ENCODE measurements at regions of chr11 and their contacts with region 1.

Region 1: DNA sequence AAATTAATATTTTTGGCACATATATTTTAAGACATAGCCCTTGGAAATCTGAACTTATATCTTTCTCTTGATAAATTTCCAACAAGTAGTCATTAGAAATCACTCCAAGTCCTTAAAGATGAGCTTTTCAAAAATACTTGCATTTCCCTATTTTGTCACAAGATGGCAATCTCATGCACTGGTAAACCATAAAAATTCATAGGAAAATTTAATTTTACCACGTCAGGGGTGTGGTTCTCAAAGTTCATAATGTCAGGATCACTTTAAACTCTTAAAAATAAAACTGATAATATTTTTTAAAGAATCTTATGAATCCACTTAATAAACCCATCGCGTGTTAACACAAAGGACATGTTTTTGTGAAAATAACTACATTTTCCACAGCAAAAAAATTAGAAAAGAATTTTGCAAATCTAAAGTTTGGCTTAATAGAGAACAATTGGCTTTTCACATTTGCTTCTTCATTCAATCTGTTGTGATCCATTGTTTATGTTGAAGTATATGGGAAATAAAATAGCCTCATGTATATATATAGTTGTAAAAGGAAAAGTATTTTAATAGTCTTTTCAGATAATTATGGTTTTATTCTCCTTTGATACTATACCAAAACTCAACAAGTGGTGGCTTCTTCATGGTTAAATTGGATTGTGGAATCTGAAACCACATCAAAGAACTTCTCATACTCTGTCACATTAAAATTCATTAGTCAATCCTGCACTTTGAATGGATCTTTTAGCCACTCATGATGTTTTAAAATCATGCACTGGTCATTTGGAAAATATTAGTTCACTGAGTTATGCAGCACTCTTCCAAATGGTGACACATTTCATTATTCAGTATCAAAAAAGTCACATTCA is 169.1 kb downstream of the CADM1 start:
- DNase-seq: no peak
- ATAC-seq: no peak
- H3K4me3 ChIP-seq: no peak overlapping the region
- H3K27ac ChIP-seq: no peak overlapping the region
- H3K4me1 ChIP-seq: no peaks in the 10 kb centered on the region
- H3K27me3 ChIP-seq: peaks cover 0 to 1% of the 10 kb centered on the region in 2 experiments; a peak in 2 of 4 replicates
- CTCF ChIP-seq: peak; percentile 44 to 64 (median 56); a peak in 5 of 6 replicates
- EP300 ChIP-seq: no peak
- POLR2A ChIP-seq: no peak
- RAD21 ChIP-seq: peak; percentile 73

Region 2: DNA sequence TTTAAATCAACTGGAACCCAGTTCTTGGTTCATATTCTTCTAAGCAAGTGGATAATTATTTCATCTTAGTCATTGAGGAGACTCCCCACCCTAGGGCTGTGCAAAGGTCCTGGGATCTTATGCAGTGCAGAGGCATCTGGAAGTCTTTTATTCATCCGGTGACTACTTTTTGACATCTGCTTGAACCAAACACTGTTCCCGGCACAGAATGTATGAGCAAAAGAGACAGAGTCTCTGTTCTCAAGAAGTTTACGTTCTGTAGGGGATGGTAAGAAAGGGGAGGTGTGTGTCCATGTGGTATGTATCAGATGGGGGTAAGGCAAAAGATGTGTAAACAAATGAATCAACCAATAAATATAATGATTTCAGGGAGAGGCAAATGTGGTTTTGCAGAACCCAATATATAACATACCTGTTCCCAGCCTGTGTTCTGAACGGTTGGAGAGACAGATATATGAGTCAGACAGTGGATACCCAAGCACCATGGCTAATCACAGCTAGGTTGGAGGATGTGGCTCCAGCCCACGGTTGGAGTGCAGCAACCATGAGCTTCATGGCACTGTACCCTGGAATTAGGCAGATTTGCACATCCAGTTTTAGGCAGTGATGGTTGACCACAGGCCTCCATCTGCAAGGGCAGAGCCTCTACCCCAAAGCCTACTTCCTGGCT is 244.1 kb after region 1 on chr11:
- CTCF ChIA-PET with region 1: no interaction called
- POLR2A ChIA-PET with region 1: no interaction called
- RAD21 ChIA-PET with region 1: no interaction called
- SMC1A ChIA-PET with region 1: no interaction called
- in situ Hi-C with region 1: no loop called
- intact Hi-C with region 1: no loop called
- DNase-seq: no peak
- ATAC-seq: no peak
- H3K4me3 ChIP-seq: no peak overlapping the region
- H3K27ac ChIP-seq: no peak overlapping the region
- H3K4me1 ChIP-seq: no peaks in the 10 kb centered on the region
- H3K27me3 ChIP-seq: no peaks in the 10 kb centered on the region
- CTCF ChIP-seq: no peak
- EP300 ChIP-seq: no peak
- POLR2A ChIP-seq: no peak
- RAD21 ChIP-seq: no peak

Region 3: DNA sequence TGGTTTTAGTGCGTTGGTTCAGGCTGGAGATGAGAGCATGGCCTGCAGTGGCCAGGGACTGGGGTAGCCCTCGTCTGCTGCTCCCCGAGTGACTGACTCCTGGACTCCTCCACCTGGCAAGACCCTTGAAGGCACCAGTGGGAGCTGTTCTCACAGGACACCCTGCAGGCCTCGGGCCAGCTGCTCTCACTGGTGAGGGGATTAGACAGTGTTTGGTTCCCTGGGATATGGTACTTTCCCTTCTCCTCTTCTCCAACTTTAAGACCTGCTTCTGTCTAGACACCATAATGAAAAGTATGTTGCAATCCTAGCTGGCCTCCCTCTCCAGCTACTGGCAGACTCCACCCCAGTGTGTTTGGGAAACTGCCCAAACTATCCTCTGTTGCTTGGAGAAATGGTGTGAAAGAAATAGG is 337.8 kb after region 1 on chr11:
- CTCF ChIA-PET with region 1: no interaction called
- POLR2A ChIA-PET with region 1: no interaction called
- RAD21 ChIA-PET with region 1: no interaction called
- SMC1A ChIA-PET with region 1: interaction called, 3 read pairs
- in situ Hi-C with region 1: no loop called
- intact Hi-C with region 1: loop called (anchors 10 kb)
- DNase-seq: no peak
- ATAC-seq: no peak
- H3K4me3 ChIP-seq: no peak overlapping the region
- H3K27ac ChIP-seq: no peak overlapping the region
- H3K4me1 ChIP-seq: no peaks in the 10 kb centered on the region
- H3K27me3 ChIP-seq: peaks cover 0 to 2% of the 10 kb centered on the region in 2 experiments; a peak in 1 of 4 replicates
- CTCF ChIP-seq: no peak
- EP300 ChIP-seq: no peak
- POLR2A ChIP-seq: no peak
- RAD21 ChIP-seq: no peak

Region 4: DNA sequence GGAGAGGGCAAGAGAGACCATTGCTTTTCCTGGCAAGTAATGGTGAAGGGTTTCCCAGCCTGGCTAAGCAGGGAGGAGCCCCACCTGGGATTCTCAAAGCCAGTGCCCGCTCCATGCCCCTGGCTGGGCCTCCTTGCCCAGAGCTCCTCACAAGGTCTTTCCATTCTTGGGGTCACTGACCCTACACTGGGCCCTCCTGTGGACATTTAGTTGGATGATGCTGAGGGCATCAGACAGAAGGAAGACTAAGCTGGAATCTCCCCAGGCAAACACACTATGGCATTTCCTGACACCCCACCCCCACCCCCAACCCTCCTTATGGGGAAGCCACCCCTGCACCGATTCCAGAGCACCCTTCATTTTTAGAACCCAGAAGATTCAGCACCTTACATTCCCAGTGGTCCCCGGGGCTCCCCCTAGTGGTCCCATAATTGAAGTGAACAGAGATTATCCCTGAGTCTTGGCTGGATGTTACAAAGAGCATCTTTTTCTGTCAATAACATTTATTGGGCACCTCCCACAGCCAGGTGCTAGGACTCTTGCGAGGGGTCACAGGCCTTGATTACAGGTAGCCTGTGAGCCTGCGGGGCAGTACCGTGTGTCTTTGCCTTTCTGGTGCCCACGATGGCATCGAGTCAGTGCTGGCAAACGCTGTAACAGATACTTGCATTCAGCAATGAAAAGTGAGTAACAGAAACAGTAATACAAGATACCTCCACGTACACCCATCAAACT is 889.2 kb after region 1 on chr11:
- CTCF ChIA-PET with region 1: interaction called, 4 read pairs
- POLR2A ChIA-PET with region 1: no interaction called
- RAD21 ChIA-PET with region 1: no interaction called
- SMC1A ChIA-PET with region 1: no interaction called
- in situ Hi-C with region 1: no loop called
- intact Hi-C with region 1: loop called (anchors 5 kb)
- DNase-seq: no peak
- ATAC-seq: peak; percentile 92
- H3K4me3 ChIP-seq: no peak overlapping the region
- H3K27ac ChIP-seq: no peak overlapping the region
- H3K4me1 ChIP-seq: no peaks in the 10 kb centered on the region
- H3K27me3 ChIP-seq: no peaks in the 10 kb centered on the region
- CTCF ChIP-seq: peak; percentile 70 to 78 (median 76)
- EP300 ChIP-seq: no peak
- POLR2A ChIP-seq: no peak
- RAD21 ChIP-seq: peak; percentile 81

Region 5: DNA sequence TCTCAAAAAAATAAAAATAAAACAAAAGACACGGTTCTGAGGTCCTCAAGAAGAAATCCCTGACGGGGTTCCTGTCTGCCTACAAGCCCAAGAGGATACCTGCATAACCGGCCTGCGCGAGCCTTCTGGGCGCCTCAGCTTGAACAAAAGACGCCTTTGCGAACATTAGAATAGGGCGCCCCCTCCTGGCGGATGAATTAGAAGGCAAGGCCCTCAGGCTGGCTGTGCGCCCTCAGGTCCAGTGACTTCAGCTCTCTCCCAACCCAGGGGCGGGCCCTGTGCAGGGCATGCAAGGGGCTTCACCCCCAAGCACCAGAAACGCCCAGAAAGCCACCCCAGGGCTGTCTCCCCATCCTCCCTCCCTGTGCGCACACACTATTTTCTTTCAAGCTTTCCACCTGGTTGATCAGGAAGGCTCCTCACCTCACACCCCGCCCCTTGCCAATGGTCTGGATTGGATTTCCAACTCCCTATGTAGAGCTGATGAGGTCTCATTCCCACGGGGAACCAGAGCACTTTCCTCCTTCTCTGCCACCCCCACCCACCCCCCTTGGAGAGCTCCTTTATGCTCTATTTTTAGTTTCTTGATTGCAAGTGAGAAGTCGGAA is 1164.3 kb after region 1 on chr11:
- CTCF ChIA-PET with region 1: no interaction called
- POLR2A ChIA-PET with region 1: no interaction called
- RAD21 ChIA-PET with region 1: no interaction called
- SMC1A ChIA-PET with region 1: no interaction called
- in situ Hi-C with region 1: no loop called
- intact Hi-C with region 1: loop called (anchors 5 kb)
- DNase-seq: no peak
- ATAC-seq: peak; percentile 88
- H3K4me3 ChIP-seq: no peak overlapping the region
- H3K27ac ChIP-seq: no peak overlapping the region
- H3K4me1 ChIP-seq: no peaks in the 10 kb centered on the region
- H3K27me3 ChIP-seq: peaks cover 5 to 12% of the 10 kb centered on the region in 2 experiments
- CTCF ChIP-seq: peak; percentile 48 to 62 (median 55)
- EP300 ChIP-seq: no peak
- POLR2A ChIP-seq: no peak
- RAD21 ChIP-seq: peak; percentile 61

Measured in GM12878 (cell line).